Panc1 (cell line): ENCODE measurements at regions of chr1 and their contacts with region 1.

Region 1: GRCh38 chr1:112614460-112615065 is 4.4 kb downstream of the ST7L start:
- DNase-seq: no peak
- ATAC-seq: no peak
- H3K4me3 ChIP-seq: no peak overlapping the region
- H3K27ac ChIP-seq: no peak overlapping the region
- H3K4me1 ChIP-seq: 0 out of 2 replicates have a peak, but pooled peaks cover 5% of the 10 kb centered on the region
- H3K27me3 ChIP-seq: no peaks in the 10 kb centered on the region
- CTCF ChIP-seq: peak; percentile 70

Region 2: GRCh38 chr1:111851552-111851951 is 763.0 kb before region 1 on chr1:
- CTCF ChIA-PET with region 1: no interaction called
- POLR2A ChIA-PET with region 1: no interaction called
- in situ Hi-C with region 1: no loop called
- intact Hi-C with region 1: no loop called
- DNase-seq: no peak
- ATAC-seq: no peak
- H3K4me3 ChIP-seq: no peak overlapping the region
- H3K27ac ChIP-seq: no peak overlapping the region
- H3K4me1 ChIP-seq: no peaks in the 10 kb centered on the region
- H3K27me3 ChIP-seq: no peaks in the 10 kb centered on the region; the same call in 1 of the 2 replicates
- CTCF ChIP-seq: no peak

Region 3: DNA sequence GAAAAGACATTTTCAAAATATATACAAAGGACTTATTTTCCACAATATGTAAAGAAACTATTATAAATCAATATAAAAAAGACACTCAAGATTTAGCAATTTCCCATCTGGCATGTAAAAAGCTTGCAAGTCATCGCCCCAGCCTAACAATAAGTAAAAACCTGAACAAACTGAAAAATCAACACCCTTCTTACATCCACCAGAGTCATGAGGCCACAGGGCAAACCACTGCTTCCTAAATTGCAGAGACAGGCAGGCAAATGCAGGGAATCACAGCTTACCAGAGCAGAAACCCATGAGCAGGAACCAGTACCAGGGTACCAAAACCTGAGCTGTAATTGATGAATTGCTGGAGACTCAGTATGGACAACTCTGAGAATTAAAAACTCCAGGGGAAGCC is 122.5 kb before region 1 on chr1:
- CTCF ChIA-PET with region 1: no interaction called
- POLR2A ChIA-PET with region 1: no interaction called
- in situ Hi-C with region 1: no loop called
- intact Hi-C with region 1: no loop called
- DNase-seq: no peak
- ATAC-seq: no peak
- H3K4me3 ChIP-seq: no peak overlapping the region
- H3K27ac ChIP-seq: no peak overlapping the region
- H3K4me1 ChIP-seq: no peaks in the 10 kb centered on the region
- H3K27me3 ChIP-seq: no peaks in the 10 kb centered on the region
- CTCF ChIP-seq: no peak

Region 4: DNA sequence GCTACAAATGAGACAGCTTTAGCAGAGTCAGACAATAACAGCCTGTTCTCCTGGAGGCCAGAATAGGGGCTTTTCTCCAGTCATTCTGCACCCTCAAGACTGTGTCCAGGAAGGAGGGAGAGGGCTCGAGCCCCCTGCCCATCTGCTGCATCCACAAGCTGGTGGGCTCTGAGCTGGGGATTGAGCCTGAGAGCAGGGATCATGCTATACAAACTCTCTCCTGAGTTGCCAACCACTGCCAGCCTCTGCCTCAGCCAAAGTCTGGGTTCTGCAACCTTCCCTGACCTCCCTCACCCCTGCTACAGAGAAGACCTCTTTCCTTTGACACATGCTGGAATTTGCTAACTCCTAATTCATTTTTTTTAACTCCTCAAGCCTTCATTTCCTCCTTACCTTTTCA is 115.3 kb after region 1 on chr1:
- CTCF ChIA-PET with region 1: interaction called, 15 read pairs
- POLR2A ChIA-PET with region 1: no interaction called
- in situ Hi-C with region 1: no loop called
- intact Hi-C with region 1: no loop called
- DNase-seq: no peak
- ATAC-seq: no peak
- H3K4me3 ChIP-seq: no peak overlapping the region
- H3K27ac ChIP-seq: no peak overlapping the region
- H3K4me1 ChIP-seq: no peaks in the 10 kb centered on the region
- H3K27me3 ChIP-seq: no peaks in the 10 kb centered on the region
- CTCF ChIP-seq: no peak

Region 5: DNA sequence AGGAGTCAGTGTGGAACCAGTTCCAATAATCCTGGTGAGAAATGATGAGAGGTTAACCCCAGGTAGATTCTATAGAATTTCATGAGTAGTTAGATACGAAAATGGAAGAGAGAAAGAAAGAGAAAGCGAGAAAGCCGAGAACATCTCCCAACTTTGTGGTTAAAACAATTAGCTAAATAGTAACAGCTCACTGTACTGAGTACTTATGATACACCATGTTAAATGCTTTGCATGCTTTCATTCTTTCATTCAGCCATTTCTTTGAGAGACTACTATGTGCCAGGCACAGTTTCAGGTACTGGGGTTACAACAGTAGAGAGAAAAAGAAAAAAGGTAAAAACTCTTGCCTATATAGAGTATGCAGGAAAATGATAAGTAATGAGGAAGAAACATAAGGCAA is 1648.8 kb after region 1 on chr1:
- CTCF ChIA-PET with region 1: no interaction called
- POLR2A ChIA-PET with region 1: no interaction called
- in situ Hi-C with region 1: no loop called
- intact Hi-C with region 1: no loop called
- DNase-seq: no peak
- ATAC-seq: no peak
- H3K4me3 ChIP-seq: no peak overlapping the region
- H3K27ac ChIP-seq: no peak overlapping the region
- H3K4me1 ChIP-seq: no peaks in the 10 kb centered on the region
- H3K27me3 ChIP-seq: no peaks in the 10 kb centered on the region; the same call in 1 of the 2 replicates
- CTCF ChIP-seq: no peak